ENCODE measurements at regions of chr11 and their contacts with region 1.

Region 1: DNA sequence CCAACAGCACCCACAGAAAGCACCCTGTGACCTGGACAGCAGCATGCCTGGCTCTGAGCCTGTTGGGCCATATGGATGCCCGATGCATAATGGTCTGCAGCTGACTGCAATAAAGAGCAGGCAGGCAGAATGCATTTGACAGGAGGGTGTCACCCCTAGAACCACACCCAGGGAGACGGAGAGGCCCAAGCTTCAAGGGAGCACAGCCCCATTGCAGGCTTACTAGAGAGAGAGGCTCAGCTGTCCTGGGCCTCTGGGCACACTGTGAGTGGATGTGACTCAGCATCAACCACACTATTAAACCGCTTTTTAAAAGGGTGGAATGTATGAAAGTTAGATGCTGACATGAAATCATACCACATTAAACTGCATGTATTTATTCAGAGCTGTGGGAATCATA is 365.3 kb downstream of the CTTN start:
- DNase-seq: peak; percentile 43
- ATAC-seq: no peak
- H3K4me3 ChIP-seq: no peak overlapping the region
- H3K27ac ChIP-seq: no peak overlapping the region
- H3K4me1 ChIP-seq: no peaks in the 10 kb centered on the region
- H3K27me3 ChIP-seq: no peaks in the 10 kb centered on the region
- CTCF ChIP-seq: no peak

Region 2: DNA sequence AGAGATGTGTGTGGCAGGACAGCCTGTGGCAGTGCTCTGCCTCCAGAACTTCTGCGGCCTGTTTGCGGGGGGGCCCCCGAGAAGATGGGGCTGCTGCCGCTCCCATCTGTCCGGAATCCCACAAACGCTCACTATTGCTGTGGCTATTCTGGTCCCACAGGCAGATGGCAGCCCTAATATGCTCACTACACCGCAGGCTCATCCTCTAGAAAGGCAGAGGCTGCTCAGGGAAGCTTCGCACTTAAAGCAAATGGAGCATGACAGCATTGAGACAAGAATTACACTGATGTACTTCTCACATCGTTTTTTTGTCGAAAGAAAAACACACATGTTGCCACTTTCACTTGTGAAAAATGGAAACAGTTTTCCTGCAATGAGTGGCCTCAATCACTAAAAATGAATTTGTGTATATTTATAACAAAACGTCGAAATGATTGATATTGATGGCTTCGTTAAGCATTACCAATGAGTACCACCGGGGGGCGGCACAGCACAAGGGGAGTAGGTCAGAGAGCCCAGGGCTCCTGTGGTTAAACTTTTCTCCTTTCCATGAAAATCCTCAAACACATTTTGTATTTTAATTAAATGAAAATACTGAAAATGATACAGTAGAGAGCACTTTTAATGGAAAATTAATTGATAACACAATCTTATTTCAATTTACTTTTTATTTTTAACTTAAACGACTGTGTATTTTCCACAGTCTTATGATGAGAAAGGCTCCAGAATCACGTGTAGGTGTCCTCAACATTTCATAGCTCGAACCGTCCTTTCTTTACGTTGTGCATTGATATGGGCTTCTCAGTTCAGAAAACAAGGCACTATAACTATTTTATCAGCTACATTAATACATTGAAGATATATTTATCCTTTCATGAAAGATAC is 296.2 kb before region 1 on chr11:
- intact Hi-C with region 1: loop called (anchors 10 kb)
- DNase-seq: peak; percentile 78
- ATAC-seq: peak; percentile 70
- H3K4me3 ChIP-seq: no peak overlapping the region
- H3K27ac ChIP-seq: no peak overlapping the region
- H3K4me1 ChIP-seq: no peaks in the 10 kb centered on the region
- H3K27me3 ChIP-seq: peaks cover 9% of the 10 kb centered on the region
- CTCF ChIP-seq: peak; percentile 80

Region 3: DNA sequence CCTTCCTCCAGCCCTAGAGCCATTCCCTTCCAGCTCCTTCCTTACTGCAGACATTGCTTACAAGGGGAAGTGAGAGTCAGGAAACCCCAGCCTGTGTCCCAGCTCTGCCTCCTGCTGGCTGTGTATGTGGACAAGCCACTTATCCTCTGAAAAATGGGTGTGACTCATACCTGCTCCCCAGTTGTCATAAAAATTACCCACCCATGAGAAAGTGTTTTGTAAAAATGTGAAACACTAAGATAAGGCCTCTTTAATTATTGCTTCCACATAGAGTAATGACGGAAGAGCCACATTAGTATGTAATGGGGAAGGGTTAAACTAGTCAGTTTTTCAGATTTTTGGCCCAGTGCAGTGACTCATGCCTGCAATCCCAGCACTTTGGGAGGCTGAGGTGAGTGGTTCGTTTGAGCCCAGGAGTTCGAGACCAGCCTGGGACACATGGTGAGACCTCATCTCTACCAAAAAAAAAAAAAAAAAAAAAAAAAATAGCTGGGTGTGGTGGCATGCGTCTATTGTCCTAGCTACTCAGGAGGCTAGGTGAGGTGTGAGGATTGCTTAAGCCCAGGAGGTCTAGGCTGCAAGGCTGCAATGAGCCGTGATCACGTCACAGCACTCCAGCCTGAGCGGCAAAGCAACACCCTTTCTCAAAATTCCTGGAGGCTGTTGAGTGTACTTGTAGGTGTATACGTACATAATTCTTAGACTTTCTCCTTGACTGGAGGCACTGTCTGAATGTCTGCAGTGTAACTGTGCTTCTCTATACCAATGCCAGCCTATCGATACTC is 280.3 kb before region 1 on chr11:
- intact Hi-C with region 1: no loop called
- DNase-seq: peak; percentile 83
- ATAC-seq: peak; percentile 75
- H3K4me3 ChIP-seq: no peak overlapping the region
- H3K27ac ChIP-seq: peak overlapping the region; percentile 25
- H3K4me1 ChIP-seq: peaks cover 3% of the 10 kb centered on the region
- H3K27me3 ChIP-seq: no peaks in the 10 kb centered on the region
- CTCF ChIP-seq: peak; percentile 42